Heart left ventricle (tissue), 16 donors: ENCODE measurements at regions of chr13 and their contacts with region 1.

Region 1: GRCh38 chr13:71879129-71879535 is 12.1 kb upstream of the DACH1 start:
- DNase-seq: peak in 1 of 5 donors; percentile 12
- ATAC-seq: peak; percentile 71 to 78 (median 72)
- H3K4me3 ChIP-seq: peak overlapping the region in 3 of 12 donors; percentile 10 to 21 (median 20)
- H3K27ac ChIP-seq: peak overlapping the region in 1 of 12 donors; percentile 19
- H3K4me1 ChIP-seq: peaks cover 0 to 9% (median 0%) of the 10 kb centered on the region in 12 donors
- H3K27me3 ChIP-seq: no peaks in the 10 kb centered on the region
- CTCF ChIP-seq: peak; percentile 40 to 76 (median 64)
- POLR2A ChIP-seq: no peak

Region 2: GRCh38 chr13:70623239-70623638 is 1255.9 kb before region 1 on chr13:
- intact Hi-C with region 1: loop called in 1 of 10 experiments (anchors 10 kb)
- DNase-seq: no peak
- ATAC-seq: no peak
- H3K4me3 ChIP-seq: no peak overlapping the region
- H3K27ac ChIP-seq: no peak overlapping the region
- H3K4me1 ChIP-seq: no peaks in the 10 kb centered on the region
- H3K27me3 ChIP-seq: no peaks in the 10 kb centered on the region
- CTCF ChIP-seq: peak in 10 of 12 donors; percentile 19 to 58 (median 38)
- POLR2A ChIP-seq: no peak

Region 3: GRCh38 chr13:70941454-70941853 is 937.7 kb before region 1 on chr13:
- intact Hi-C with region 1: no loop called
- DNase-seq: no peak
- ATAC-seq: no peak
- H3K4me3 ChIP-seq: no peak overlapping the region
- H3K27ac ChIP-seq: no peak overlapping the region
- H3K4me1 ChIP-seq: no peaks in the 10 kb centered on the region
- H3K27me3 ChIP-seq: no peaks in the 10 kb centered on the region
- CTCF ChIP-seq: no peak
- POLR2A ChIP-seq: no peak

Region 4: GRCh38 chr13:71240911-71241310 is 638.2 kb before region 1 on chr13:
- intact Hi-C with region 1: loop called in 1 of 10 experiments (anchors 2 kb)
- DNase-seq: no peak
- ATAC-seq: peak in 3 of 4 donors; percentile 50 to 66 (median 61)
- H3K4me3 ChIP-seq: no peak overlapping the region
- H3K27ac ChIP-seq: no peak overlapping the region
- H3K4me1 ChIP-seq: peaks cover 0 to 18% (median 3%) of the 10 kb centered on the region in 12 donors
- H3K27me3 ChIP-seq: no peaks in the 10 kb centered on the region
- CTCF ChIP-seq: peak in 11 of 12 donors; percentile 28 to 62 (median 43)
- POLR2A ChIP-seq: no peak

Region 5: GRCh38 chr13:71303144-71303543 is 576.0 kb before region 1 on chr13:
- intact Hi-C with region 1: loop called in 5 of 10 experiments (anchors 5 to 10 kb)
- DNase-seq: no peak
- ATAC-seq: no peak
- H3K4me3 ChIP-seq: no peak overlapping the region
- H3K27ac ChIP-seq: no peak overlapping the region
- H3K4me1 ChIP-seq: no peaks in the 10 kb centered on the region
- H3K27me3 ChIP-seq: no peaks in the 10 kb centered on the region
- CTCF ChIP-seq: peak in 6 of 12 donors; percentile 8 to 43 (median 22)
- POLR2A ChIP-seq: no peak

Region 6: GRCh38 chr13:71499235-71499634 is 379.9 kb before region 1 on chr13:
- intact Hi-C with region 1: loop called in 1 of 10 experiments (anchors 10 kb)
- DNase-seq: no peak
- ATAC-seq: peak in 1 of 4 donors; percentile 55
- H3K4me3 ChIP-seq: no peak overlapping the region
- H3K27ac ChIP-seq: peak overlapping the region in 10 of 12 donors; percentile 16 to 73 (median 54)
- H3K4me1 ChIP-seq: peaks cover 0 to 13% (median 1%) of the 10 kb centered on the region in 12 donors
- H3K27me3 ChIP-seq: no peaks in the 10 kb centered on the region
- CTCF ChIP-seq: no peak
- POLR2A ChIP-seq: no peak